T-cell (primary cell): ENCODE measurements at regions of chr11 and their contacts with region 1.

Region 1: DNA sequence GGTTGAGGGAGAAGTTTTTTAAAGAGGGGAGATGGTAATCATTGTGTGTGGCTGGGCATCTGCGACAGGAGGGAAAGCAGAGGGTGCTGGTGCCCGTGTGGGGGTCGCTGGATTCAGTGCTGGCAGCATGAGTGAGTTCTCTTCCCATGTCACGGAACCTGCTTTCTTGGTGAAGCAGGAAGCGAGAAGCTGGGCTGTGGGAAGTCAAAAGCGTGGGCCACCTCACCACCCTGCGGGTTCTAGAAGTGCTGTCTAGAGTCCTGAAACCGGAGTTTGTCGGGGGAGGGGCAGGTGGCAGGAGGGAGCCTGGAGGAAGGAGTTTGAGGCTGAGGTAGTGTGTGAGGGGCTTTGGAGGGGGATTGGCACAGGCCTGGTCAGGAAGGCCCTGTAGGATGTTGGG is 14.2 kb downstream of the SART1 start:
- DNase-seq: no peak
- ATAC-seq: no peak
- H3K4me3 ChIP-seq: no peak overlapping the region
- H3K4me3 Mint-ChIP-seq: no peak overlapping the region
- H3K27ac ChIP-seq: no peak overlapping the region
- H3K27ac Mint-ChIP-seq: no peak overlapping the region
- H3K4me1 ChIP-seq: no peaks in the 10 kb centered on the region
- H3K4me1 Mint-ChIP-seq: peaks cover 0 to 6% (median 0%) of the 10 kb centered on the region in 3 donors
- H3K27me3 ChIP-seq: no peaks in the 10 kb centered on the region
- H3K27me3 Mint-ChIP-seq: no peaks in the 10 kb centered on the region

Region 2: GRCh38 chr11:65833297-65834030 is 142.3 kb before region 1 on chr11 and contains the start of gene SNX32:
- CTCF ChIA-PET with region 1: interaction called in 1 of 2 experiments, 4 read pairs
- POLR2A ChIA-PET with region 1: interaction called in 1 of 2 experiments, 10 read pairs
- DNase-seq: peak; percentile 84 to 95 (median 91)
- ATAC-seq: peak; percentile 99
- H3K4me3 ChIP-seq: peak within 1 kb of the TSS; percentile 67 to 93
- H3K4me3 Mint-ChIP-seq: no peak within 1 kb of the TSS
- H3K27ac ChIP-seq: peak within 1 kb of the TSS; percentile 74
- H3K27ac Mint-ChIP-seq: peak within 1 kb of the TSS in 1 of 2 donors; percentile 23
- H3K4me1 ChIP-seq: peaks cover 7 to 24% of the 10 kb centered on the region in 2 experiments
- H3K4me1 Mint-ChIP-seq: peaks cover 8 to 16% (median 9%) of the 10 kb centered on the region in 3 donors
- H3K27me3 ChIP-seq: peaks cover 0 to 2% of the 10 kb centered on the region in 2 experiments
- H3K27me3 Mint-ChIP-seq: no peaks in the 10 kb centered on the region
- total RNA-seq, gene SNX32: 0.26 to 1.4 (median 1.2) TPM

Region 3: DNA sequence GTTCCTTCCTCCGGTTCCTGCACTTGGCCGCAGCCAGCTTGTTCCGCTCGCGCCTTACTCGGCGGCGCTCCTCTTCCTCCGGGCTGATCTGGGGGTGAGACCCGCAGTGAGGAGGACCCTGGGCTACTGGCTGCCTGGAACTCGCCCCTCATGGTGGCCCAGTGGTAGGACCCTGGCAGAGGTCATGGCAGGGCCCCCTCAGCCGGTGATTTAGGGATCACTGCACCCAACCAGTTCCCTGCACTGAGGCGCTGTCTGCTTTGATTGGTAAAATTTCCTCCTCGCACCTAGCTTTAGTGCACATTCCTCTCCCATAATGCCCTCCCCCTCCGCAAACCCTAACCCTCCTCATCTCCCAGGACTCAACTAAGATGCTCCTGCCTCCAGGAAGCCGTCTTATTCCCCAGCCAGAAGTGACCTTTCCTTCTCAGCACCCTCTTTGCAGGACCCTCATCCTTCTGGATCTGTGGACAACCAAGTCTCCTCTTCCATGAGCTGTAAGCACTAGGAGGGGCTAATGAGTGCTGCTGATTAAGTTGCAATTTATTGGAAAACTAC is 81.7 kb before region 1 on chr11:
- CTCF ChIA-PET with region 1: no interaction called
- POLR2A ChIA-PET with region 1: no interaction called
- DNase-seq: peak in 4 of 35 experiments; percentile 19 to 58 (median 33)
- ATAC-seq: no peak
- H3K4me3 ChIP-seq: peak overlapping the region; percentile 42 to 48
- H3K4me3 Mint-ChIP-seq: peak overlapping the region; percentile 67 to 94 (median 79)
- H3K27ac ChIP-seq: peak overlapping the region; percentile 83
- H3K27ac Mint-ChIP-seq: peak overlapping the region; percentile 90 to 92
- H3K4me1 ChIP-seq: peaks cover 26 to 60% of the 10 kb centered on the region in 2 experiments
- H3K4me1 Mint-ChIP-seq: peaks cover 39 to 52% (median 50%) of the 10 kb centered on the region in 3 donors
- H3K27me3 ChIP-seq: peaks cover 0 to 5% of the 10 kb centered on the region in 2 experiments
- H3K27me3 Mint-ChIP-seq: peaks cover 0 to 3% of the 10 kb centered on the region in 2 donors